IMR-90 (cell line): ENCODE measurements at regions of chr4 and their contacts with region 1.

Region 1: DNA sequence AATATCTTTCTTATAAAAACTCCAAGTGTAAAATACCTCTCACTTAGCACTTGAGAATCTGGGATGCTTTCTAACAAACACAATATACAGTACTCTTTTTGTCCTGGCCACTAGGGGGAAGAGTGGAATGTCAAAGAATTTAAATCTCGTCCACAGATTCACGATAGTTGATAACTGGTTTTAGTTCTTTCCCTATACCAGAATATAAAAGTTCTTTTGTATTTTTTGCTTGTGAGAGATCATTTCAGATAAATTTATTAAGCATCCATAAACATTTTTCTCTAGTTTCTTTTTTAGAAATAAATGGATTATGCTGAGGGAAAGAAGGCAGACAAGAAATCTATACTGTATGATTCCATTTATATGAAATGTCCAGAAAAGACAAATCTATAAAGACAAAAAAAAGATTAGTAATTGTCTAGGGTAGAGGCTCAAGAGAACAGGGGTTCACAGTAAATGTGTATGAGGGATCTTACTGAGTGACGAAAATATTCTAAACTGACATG is 50.4 kb downstream of the MGARP start:
- DNase-seq: peak; percentile 68
- ATAC-seq: peak; percentile 89
- H3K4me3 ChIP-seq: no peak overlapping the region
- H3K27ac ChIP-seq: no peak overlapping the region
- H3K4me1 ChIP-seq: no peaks in the 10 kb centered on the region
- H3K27me3 ChIP-seq: no peaks in the 10 kb centered on the region
- CTCF ChIP-seq: peak; percentile 76
- POLR2A ChIP-seq: no peak
- RAD21 ChIP-seq: peak; percentile 69

Region 2: GRCh38 chr4:139279760-139280620 is 50.4 kb after region 1 on chr4 and contains the start of gene MGARP:
- CTCF ChIA-PET with region 1: no interaction called
- POLR2A ChIA-PET with region 1: interaction called, 3 read pairs
- dilution Hi-C with region 1: no loop called
- in situ Hi-C with region 1: no loop called
- intact Hi-C with region 1: loop called (anchors 5 kb)
- DNase-seq: peak; percentile 30
- ATAC-seq: peak; percentile 86
- H3K4me3 ChIP-seq: peak within 1 kb of the TSS; percentile 60
- H3K27ac ChIP-seq: peak within 1 kb of the TSS; percentile 33
- H3K4me1 ChIP-seq: peaks cover 3% of the 10 kb centered on the region
- H3K27me3 ChIP-seq: no peaks in the 10 kb centered on the region
- CTCF ChIP-seq: no peak
- POLR2A ChIP-seq: no peak
- RAD21 ChIP-seq: no peak
- total RNA-seq, gene MGARP: 35.0 and 44.4 TPM in 2 replicates